Activated CD4-positive, alpha-beta memory T cell treated with anti-CD3 and anti-CD28 coated beads, Interleukin-2, amount 10 ng/mL, durations not matched to agents 7 days and 5 days (primary cell): ENCODE measurements at regions of chr11 and their contacts with region 1.

Region 1: GRCh38 chr11:17384002-17384511 is 4.4 kb downstream of the KCNJ11 start:
- DNase-seq: peak; percentile 79
- H3K4me3 Mint-ChIP-seq: no peak overlapping the region
- H3K27ac Mint-ChIP-seq: no peak overlapping the region
- H3K4me1 Mint-ChIP-seq: peaks cover 2% of the 10 kb centered on the region
- H3K27me3 Mint-ChIP-seq: peaks cover 13% of the 10 kb centered on the region

Region 2: GRCh38 chr11:17230867-17231851 is 152.9 kb before region 1 on chr11:
- CTCF ChIA-PET with region 1: interaction called, 10 read pairs
- POLR2A ChIA-PET with region 1: no interaction called
- DNase-seq: peak; percentile 21
- H3K4me3 Mint-ChIP-seq: no peak overlapping the region
- H3K27ac Mint-ChIP-seq: no peak overlapping the region
- H3K4me1 Mint-ChIP-seq: peaks cover 14% of the 10 kb centered on the region
- H3K27me3 Mint-ChIP-seq: peaks cover 17% of the 10 kb centered on the region

Region 3: DNA sequence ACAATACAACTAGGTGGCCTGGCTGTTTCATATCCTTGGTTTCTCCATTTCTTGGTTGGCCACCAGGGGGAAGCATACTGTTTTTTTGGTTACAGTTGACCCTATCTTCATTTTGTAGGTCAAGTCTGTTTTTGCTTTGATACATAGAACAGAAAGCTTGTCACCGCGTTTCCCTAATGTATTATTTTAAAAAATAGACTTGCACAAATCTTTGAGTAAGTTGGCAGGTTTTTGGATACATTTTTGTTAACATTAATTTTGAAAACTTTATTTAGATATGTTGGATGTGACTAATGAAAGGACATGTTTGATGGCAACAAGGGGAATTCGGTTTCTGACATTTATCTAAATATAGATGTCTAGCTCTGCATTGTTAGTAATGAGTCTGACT is 29.5 kb before region 1 on chr11:
- CTCF ChIA-PET with region 1: interaction called, 13 read pairs
- POLR2A ChIA-PET with region 1: interaction called, 4 read pairs
- DNase-seq: peak; percentile 64
- H3K4me3 Mint-ChIP-seq: no peak overlapping the region
- H3K27ac Mint-ChIP-seq: no peak overlapping the region
- H3K4me1 Mint-ChIP-seq: peaks cover 35% of the 10 kb centered on the region
- H3K27me3 Mint-ChIP-seq: peaks cover 39% of the 10 kb centered on the region

Region 4: DNA sequence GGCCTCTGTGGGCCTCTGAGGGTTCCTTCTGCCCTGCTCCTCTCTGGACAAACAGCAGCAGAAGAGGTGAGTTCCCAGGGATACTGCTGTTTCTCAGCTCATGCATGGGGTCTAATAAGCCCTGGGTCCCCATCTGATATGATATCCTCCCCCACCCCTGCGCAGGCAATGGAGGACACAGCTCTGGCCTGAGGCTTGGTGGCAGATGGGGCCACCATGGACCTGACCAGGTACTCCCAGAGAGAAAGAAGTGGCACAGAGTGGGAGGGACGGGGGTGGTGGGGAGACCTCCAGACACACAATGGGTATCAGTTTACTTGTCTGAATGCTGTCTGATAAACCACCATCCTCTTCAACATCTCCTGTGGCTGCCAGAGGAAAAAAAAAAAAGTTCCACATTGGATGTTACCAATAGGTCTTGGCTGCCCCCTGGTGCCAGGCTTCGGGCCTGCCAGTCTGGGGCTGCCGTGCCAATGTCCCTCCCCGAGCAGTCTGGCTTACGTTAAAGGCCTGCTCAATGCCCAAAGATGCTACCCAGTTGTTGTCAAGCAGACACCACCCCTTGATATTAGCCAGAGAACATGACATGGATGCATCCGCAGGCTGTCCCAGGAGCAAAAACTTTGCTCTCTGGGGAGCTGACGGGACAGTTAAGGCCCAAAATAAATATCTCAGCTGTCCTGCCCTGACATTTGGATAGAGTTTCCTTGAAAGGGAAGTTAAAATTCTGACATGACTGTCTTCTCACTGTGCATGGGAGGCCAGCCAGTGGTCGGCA is 120.5 kb after region 1 on chr11:
- CTCF ChIA-PET with region 1: interaction called, 46 read pairs
- POLR2A ChIA-PET with region 1: interaction called, 3 read pairs
- DNase-seq: peak; percentile 77
- H3K4me3 Mint-ChIP-seq: no peak overlapping the region
- H3K27ac Mint-ChIP-seq: no peak overlapping the region
- H3K4me1 Mint-ChIP-seq: no peaks in the 10 kb centered on the region
- H3K27me3 Mint-ChIP-seq: no peaks in the 10 kb centered on the region

Region 5: GRCh38 chr11:17528181-17528691 is 144.2 kb after region 1 on chr11:
- CTCF ChIA-PET with region 1: interaction called, 30 read pairs
- POLR2A ChIA-PET with region 1: no interaction called
- DNase-seq: peak; percentile 52
- H3K4me3 Mint-ChIP-seq: no peak overlapping the region
- H3K27ac Mint-ChIP-seq: no peak overlapping the region
- H3K4me1 Mint-ChIP-seq: no peaks in the 10 kb centered on the region
- H3K27me3 Mint-ChIP-seq: peaks cover 7% of the 10 kb centered on the region